ENCODE measurements at regions of chr6 and their contacts with region 1.

Region 1: DNA sequence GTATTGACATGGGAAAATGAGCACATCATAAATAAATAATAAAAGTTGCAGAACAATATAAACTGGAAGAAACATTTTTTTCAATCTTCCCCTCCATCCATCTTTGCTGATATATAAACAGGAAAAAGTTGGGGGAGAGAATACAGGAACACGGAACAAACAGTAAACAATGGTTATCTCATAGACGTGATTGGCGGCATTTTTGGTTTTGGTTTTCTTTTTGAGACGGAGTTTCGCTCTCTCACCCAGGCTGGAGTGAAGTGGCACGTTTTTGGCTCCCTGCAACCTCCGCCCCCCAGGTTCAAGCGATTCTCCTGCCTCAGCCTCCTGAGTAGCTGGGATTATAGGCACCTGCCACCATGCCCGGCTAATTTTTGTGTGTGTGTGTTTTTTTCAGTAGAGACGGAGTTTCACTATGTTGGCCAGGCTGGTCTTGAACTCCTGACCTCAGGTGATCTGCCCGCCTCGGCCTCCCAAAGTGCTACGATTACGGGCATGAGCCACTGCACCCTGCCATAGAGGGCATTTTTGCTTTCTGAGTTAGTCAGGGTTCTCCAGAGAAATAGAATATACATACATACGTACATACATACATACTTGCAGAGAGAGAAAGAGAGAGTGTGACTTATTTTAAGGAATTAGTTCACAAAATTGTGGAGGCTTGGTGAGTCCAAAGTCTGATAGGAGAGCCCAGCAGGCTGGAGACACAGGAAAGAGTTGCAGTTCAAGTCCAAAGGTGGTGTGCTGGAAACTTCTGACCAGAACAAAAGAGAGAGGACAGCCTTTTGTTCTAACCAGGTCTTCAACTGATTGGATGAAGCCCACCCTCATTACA is 22.6 kb downstream of the GNL1 start:
- DNase-seq: no peak
- ATAC-seq: no peak
- H3K4me3 Mint-ChIP-seq: peak overlapping the region; percentile 41
- H3K27ac Mint-ChIP-seq: peak overlapping the region; percentile 89
- H3K4me1 Mint-ChIP-seq: peaks cover 43% of the 10 kb centered on the region
- H3K27me3 Mint-ChIP-seq: no peaks in the 10 kb centered on the region
- CTCF ChIP-seq: no peak

Region 2: DNA sequence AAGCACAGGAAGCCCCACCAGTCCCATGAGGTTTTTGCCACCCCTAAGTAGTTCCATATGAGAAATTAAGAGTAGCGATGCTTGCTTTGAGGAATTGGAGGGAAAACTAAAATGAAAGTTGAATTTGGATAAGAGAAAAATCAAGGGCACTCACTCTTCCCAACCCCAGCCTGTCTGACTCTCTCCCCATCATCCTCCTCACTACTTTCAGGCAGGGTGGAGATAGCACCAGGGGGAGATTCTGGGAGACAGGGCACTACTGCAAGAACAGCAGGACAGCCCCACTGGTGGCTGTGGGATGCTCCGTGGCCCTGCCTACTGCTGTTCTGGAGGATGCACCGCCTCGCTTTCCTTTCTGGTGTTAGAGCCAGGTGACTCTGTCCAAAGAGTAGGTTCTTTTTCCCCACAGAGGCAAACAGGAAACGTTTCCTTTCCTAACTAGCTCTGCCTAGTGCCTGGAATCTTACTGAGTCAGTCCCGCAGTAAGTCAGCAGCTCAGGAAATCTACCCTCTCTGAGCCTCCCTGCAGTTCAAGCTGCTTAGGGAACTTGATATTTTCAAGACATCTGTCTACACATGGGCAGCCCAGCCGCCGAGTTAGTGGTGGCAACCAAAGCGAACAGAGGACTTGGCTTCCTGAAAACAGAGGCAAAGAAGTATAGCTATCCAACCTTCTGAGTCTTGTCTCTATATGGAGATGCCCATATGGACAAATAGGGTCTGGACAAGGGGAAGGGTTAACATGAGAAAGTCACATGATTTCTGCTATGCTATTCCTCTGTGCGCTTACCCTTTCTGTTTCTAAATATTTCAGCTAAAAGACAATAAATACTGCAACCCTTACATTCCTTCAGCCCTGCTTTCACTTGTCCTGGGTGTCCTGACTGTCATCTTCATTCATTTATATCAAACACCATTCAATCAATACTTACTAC is 33.0 kb before region 1 on chr6:
- CTCF ChIA-PET with region 1: interaction called, 73 read pairs
- POLR2A ChIA-PET with region 1: interaction called, 177 read pairs
- intact Hi-C with region 1: no loop called
- DNase-seq: no peak
- ATAC-seq: peak; percentile 32
- H3K4me3 Mint-ChIP-seq: peak overlapping the region; percentile 67
- H3K27ac Mint-ChIP-seq: peak overlapping the region; percentile 79
- H3K4me1 Mint-ChIP-seq: peaks cover 46% of the 10 kb centered on the region
- H3K27me3 Mint-ChIP-seq: no peaks in the 10 kb centered on the region
- CTCF ChIP-seq: no peak

Region 3: GRCh38 chr6:30508890-30509736 is 24.6 kb before region 1 on chr6:
- CTCF ChIA-PET with region 1: interaction called, 46 read pairs
- POLR2A ChIA-PET with region 1: interaction called, 49 read pairs
- intact Hi-C with region 1: no loop called
- DNase-seq: peak; percentile 39
- ATAC-seq: peak; percentile 65
- H3K4me3 Mint-ChIP-seq: peak overlapping the region; percentile 48
- H3K27ac Mint-ChIP-seq: peak overlapping the region; percentile 95
- H3K4me1 Mint-ChIP-seq: peaks cover 53% of the 10 kb centered on the region
- H3K27me3 Mint-ChIP-seq: no peaks in the 10 kb centered on the region
- CTCF ChIP-seq: no peak

Region 4: DNA sequence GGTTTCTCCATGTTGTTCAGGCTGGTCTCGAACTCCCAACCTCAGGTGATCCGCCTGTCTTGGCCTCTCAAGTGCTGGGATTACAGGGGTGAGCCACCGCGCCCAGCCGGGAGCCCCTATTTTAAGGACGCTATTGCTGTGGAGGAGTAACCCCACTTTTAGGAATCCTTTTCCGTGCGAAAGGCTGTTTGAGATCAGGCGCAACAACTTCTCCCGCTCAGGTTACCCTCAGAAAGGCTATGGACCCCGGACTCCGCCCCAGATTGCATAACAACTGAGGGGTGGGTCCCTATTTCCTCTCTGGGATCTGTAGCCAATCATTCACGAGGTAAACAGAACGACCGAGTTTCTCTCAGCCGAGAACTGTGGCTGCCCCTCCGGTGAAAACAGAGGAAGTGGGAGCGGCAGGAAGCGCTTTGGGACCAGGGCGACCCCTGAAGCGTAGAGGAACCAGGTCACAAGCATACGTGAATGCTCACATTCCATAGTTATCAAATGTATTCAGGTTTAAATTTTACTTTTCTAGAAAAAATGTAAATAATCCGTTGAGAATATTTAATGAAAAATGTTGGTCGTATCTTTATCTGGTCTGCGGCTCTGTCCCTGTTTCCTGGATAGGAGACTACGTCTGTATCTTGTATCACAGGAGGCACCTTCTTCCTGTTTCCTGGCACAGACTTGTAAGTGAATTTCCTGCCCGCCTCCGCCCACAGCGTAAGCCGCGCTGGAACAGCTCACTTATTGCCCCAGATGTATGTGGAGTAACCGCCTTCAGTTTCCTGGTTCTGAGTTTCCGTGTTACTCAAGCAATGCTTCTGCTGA is 17.5 kb before region 1 on chr6:
- CTCF ChIA-PET with region 1: interaction called, 46 read pairs
- POLR2A ChIA-PET with region 1: interaction called, 49 read pairs
- intact Hi-C with region 1: no loop called
- DNase-seq: peak; percentile 98
- ATAC-seq: peak; percentile 89
- H3K4me3 Mint-ChIP-seq: peak overlapping the region; percentile 79
- H3K27ac Mint-ChIP-seq: peak overlapping the region; percentile 97
- H3K4me1 Mint-ChIP-seq: peaks cover 47% of the 10 kb centered on the region
- H3K27me3 Mint-ChIP-seq: no peaks in the 10 kb centered on the region
- CTCF ChIP-seq: no peak

Region 5: GRCh38 chr6:30603961-30604360 is 70.3 kb after region 1 on chr6:
- CTCF ChIA-PET with region 1: no interaction called
- POLR2A ChIA-PET with region 1: no interaction called
- intact Hi-C with region 1: no loop called
- DNase-seq: no peak
- ATAC-seq: no peak
- H3K4me3 Mint-ChIP-seq: no peak overlapping the region
- H3K27ac Mint-ChIP-seq: no peak overlapping the region
- H3K4me1 Mint-ChIP-seq: peaks cover 18% of the 10 kb centered on the region
- H3K27me3 Mint-ChIP-seq: no peaks in the 10 kb centered on the region
- CTCF ChIP-seq: no peak